PC-9 (cell line): ENCODE measurements at regions of chr17 and their contacts with region 1.

Region 1: GRCh38 chr17:39244600-39245570 is 19.1 kb upstream of the STAC2 start:
- DNase-seq: peak; percentile 73 to 85
- H3K4me3 ChIP-seq: no peak overlapping the region
- H3K27ac ChIP-seq: no peak overlapping the region
- H3K4me1 ChIP-seq: peaks cover 11% of the 10 kb centered on the region
- H3K27me3 ChIP-seq: no peaks in the 10 kb centered on the region
- CTCF ChIP-seq: peak; percentile 97

Region 2: GRCh38 chr17:38454516-38454915 is 790.4 kb before region 1 on chr17:
- CTCF ChIA-PET with region 1: interaction called, 11 read pairs
- POLR2A ChIA-PET with region 1: no interaction called
- intact Hi-C with region 1: no loop called
- DNase-seq: peak; percentile 74 to 84
- H3K4me3 ChIP-seq: peak overlapping the region; percentile 67
- H3K27ac ChIP-seq: peak overlapping the region; percentile 38
- H3K4me1 ChIP-seq: peaks cover 65% of the 10 kb centered on the region
- H3K27me3 ChIP-seq: no peaks in the 10 kb centered on the region
- CTCF ChIP-seq: no peak

Region 3: GRCh38 chr17:38674749-38675615 is 569.9 kb before region 1 on chr17 and contains the start of gene EPOP:
- CTCF ChIA-PET with region 1: no interaction called
- POLR2A ChIA-PET with region 1: no interaction called
- intact Hi-C with region 1: loop called (anchors 10 kb)
- DNase-seq: peak; percentile 62 to 89
- H3K4me3 ChIP-seq: peak within 1 kb of the TSS; percentile 95
- H3K27ac ChIP-seq: no peak within 1 kb of the TSS
- H3K4me1 ChIP-seq: peaks cover 23% of the 10 kb centered on the region
- H3K27me3 ChIP-seq: no peaks in the 10 kb centered on the region
- CTCF ChIP-seq: no peak; the same call in 1 of the 2 replicates
- total RNA-seq, gene EPOP: 8.4 and 10.6 TPM in 2 replicates

Region 4: DNA sequence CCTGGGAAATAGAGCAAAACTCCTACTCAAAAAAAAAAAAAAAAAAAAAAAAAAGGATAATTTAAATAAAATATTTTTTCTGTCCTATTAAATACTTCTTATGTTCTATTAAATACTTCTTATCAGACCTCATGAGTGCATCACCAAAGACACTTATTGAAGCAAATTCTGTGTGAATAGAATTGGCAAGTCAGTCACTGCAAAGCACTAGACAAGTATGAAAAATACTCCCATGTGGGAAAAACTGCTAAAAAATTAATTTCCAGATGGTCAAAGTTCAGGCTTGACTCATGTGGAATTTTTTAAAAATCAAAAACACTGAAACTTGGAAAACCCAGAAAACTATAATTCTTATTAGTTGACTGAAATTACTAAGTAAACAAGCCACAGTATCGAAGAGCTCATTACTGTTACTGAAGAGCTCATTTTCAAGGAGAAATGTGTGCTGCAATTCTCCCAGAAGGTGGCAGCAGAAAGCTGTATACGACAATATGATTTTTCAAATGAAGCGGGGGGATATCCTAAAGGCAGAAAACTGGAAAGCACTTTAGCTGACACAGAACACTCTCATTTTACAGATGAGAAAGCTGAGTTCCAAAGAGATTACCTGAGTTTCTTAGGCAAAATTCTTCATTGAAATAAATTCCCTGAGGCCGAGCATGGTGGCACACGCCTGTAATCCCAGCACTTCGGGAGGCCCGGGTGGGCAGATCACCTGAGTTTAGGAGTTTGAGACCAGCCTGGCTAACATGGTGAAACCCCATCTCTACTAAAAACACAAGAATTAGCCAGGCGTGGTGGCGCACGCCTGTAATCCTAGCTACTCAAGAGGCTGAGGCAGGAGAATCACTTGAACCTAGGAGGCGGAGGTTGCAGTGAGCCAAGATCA is 261.8 kb before region 1 on chr17:
- CTCF ChIA-PET with region 1: no interaction called
- POLR2A ChIA-PET with region 1: no interaction called
- intact Hi-C with region 1: loop called (anchors 5 kb)
- DNase-seq: peak; percentile 34 to 51
- H3K4me3 ChIP-seq: no peak overlapping the region
- H3K27ac ChIP-seq: no peak overlapping the region
- H3K4me1 ChIP-seq: no peaks in the 10 kb centered on the region
- H3K27me3 ChIP-seq: no peaks in the 10 kb centered on the region
- CTCF ChIP-seq: peak; percentile 86

Region 5: GRCh38 chr17:39209317-39210092 is 35.4 kb before region 1 on chr17:
- CTCF ChIA-PET with region 1: interaction called, 10 read pairs
- POLR2A ChIA-PET with region 1: no interaction called
- intact Hi-C with region 1: loop called (anchors 1 kb)
- DNase-seq: no peak
- H3K4me3 ChIP-seq: no peak overlapping the region
- H3K27ac ChIP-seq: no peak overlapping the region
- H3K4me1 ChIP-seq: no peaks in the 10 kb centered on the region
- H3K27me3 ChIP-seq: no peaks in the 10 kb centered on the region
- CTCF ChIP-seq: no peak

Region 6: DNA sequence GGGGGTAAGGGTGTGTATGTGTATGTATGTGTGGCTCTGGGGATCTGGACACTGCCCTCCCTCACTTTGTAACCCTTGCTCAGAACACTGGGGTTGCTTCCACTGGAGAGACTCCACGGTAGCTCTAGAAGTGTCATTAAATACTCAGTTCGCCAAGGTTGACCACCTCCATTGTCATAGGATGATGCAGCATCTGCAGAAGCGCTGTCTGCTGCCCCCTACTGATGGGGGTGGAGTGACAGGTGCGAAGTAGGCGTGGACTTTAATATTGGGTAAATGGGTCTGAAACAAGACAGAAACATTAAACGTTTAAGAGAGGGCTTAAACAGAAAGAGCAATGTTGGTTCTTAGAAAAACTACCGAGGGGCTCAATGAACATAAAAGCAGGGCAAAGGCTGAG is 16.4 kb after region 1 on chr17:
- CTCF ChIA-PET with region 1: no interaction called
- POLR2A ChIA-PET with region 1: interaction called, 21 read pairs
- intact Hi-C with region 1: no loop called
- DNase-seq: no peak
- H3K4me3 ChIP-seq: no peak overlapping the region
- H3K27ac ChIP-seq: no peak overlapping the region
- H3K4me1 ChIP-seq: no peaks in the 10 kb centered on the region
- H3K27me3 ChIP-seq: no peaks in the 10 kb centered on the region
- CTCF ChIP-seq: peak; percentile 41; the same call in 1 of the 2 replicates

Region 7: GRCh38 chr17:39294060-39294459 is 49.2 kb after region 1 on chr17:
- CTCF ChIA-PET with region 1: no interaction called
- POLR2A ChIA-PET with region 1: no interaction called
- intact Hi-C with region 1: no loop called
- DNase-seq: no peak
- H3K4me3 ChIP-seq: no peak overlapping the region
- H3K27ac ChIP-seq: no peak overlapping the region
- H3K4me1 ChIP-seq: no peaks in the 10 kb centered on the region
- H3K27me3 ChIP-seq: no peaks in the 10 kb centered on the region
- CTCF ChIP-seq: no peak

Region 8: DNA sequence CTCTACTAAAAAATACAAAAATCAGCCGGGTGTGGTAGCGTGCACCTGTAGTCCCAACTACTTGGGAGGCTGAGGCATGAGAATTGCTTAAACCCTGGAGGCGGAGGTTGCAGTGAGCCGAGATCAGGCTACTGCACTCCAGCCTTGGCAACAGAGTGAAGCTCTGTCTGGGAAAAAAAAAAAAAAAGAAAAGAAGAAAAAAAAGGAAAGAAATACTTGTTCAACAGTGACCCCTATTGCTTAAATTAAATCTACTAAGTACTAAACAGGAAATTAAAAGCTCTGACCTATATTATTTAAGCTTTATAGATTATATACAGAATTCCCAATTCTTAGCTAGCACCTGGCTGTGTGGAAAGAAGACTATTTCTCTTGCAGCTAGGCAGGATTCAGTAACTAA is 107.6 kb after region 1 on chr17:
- CTCF ChIA-PET with region 1: no interaction called
- POLR2A ChIA-PET with region 1: no interaction called
- intact Hi-C with region 1: no loop called
- DNase-seq: no peak
- H3K4me3 ChIP-seq: no peak overlapping the region
- H3K27ac ChIP-seq: no peak overlapping the region
- H3K4me1 ChIP-seq: 0 out of 2 replicates have a peak, but pooled peaks cover 8% of the 10 kb centered on the region
- H3K27me3 ChIP-seq: no peaks in the 10 kb centered on the region
- CTCF ChIP-seq: peak; percentile 16; the same call in 1 of the 2 replicates

Region 9: DNA sequence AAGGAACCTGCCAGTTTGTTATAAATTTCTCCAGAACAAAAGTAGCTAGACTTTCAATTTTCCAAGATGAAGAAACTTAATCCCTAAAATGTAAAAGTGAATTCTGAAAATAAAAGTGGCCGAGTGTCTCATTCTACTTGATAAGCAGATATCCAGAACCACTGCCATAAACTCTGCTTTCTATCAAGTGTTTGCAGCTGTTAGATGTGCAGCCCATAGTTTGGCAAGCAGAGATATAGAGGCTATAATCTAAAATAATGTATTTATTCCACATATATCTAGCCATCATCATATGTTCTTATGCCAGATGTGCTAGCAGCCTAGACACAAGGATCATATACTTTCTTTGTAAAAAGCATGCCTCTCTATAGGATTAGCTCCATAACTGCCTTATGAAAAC is 171.3 kb after region 1 on chr17:
- CTCF ChIA-PET with region 1: no interaction called
- POLR2A ChIA-PET with region 1: interaction called, 14 read pairs
- intact Hi-C with region 1: no loop called
- DNase-seq: no peak
- H3K4me3 ChIP-seq: no peak overlapping the region
- H3K27ac ChIP-seq: no peak overlapping the region
- H3K4me1 ChIP-seq: no peaks in the 10 kb centered on the region
- H3K27me3 ChIP-seq: no peaks in the 10 kb centered on the region
- CTCF ChIP-seq: no peak